PC-3 (cell line): ENCODE measurements at regions of chr6 and their contacts with region 1.

Region 1: DNA sequence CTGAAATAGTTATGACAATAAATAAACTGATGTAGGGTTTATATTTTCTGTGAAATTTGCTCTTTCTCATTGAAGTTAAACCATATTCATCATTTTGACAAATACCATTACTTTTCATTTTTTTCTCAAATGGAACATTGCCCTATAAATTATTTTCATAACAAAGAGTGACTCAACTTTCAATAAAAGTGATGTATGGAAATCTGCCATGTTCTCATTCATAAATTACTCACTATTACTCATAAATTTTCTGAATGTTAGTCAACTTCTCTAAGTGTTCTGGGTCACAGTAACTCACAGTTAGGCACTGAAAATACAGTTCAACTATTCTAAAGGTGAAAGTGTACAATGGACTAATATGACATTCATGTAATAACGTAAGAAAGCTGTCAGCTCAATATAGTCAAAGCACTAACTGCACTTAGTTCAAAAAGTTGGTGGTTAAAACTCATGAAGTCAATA is 19.0 kb upstream of the STX11 start:
- DNase-seq: peak; percentile 93
- ATAC-seq: peak; percentile 95
- H3K4me3 ChIP-seq: peak overlapping the region; percentile 4; the same call in 1 of the 2 replicates
- H3K27ac ChIP-seq: peak overlapping the region; percentile 57
- H3K4me1 ChIP-seq: peaks cover 6% of the 10 kb centered on the region
- H3K27me3 ChIP-seq: no peaks in the 10 kb centered on the region
- CTCF ChIP-seq: no peak

Region 2: GRCh38 chr6:144149891-144150709 is 18.8 kb after region 1 on chr6 and contains the start of gene STX11:
- CTCF ChIA-PET with region 1: no interaction called
- POLR2A ChIA-PET with region 1: no interaction called
- intact Hi-C with region 1: loop called (anchors 2 kb)
- DNase-seq: peak; percentile 58
- ATAC-seq: peak; percentile 88
- H3K4me3 ChIP-seq: peak within 1 kb of the TSS; percentile 73
- H3K27ac ChIP-seq: no peak within 1 kb of the TSS
- H3K4me1 ChIP-seq: peaks cover 9% of the 10 kb centered on the region; the same call in 1 of the 2 replicates
- H3K27me3 ChIP-seq: no peaks in the 10 kb centered on the region
- CTCF ChIP-seq: no peak
- total RNA-seq, gene STX11: 1.2 and 1.5 TPM in 2 replicates

Region 3: GRCh38 chr6:144162977-144163376 is 31.7 kb after region 1 on chr6:
- CTCF ChIA-PET with region 1: no interaction called
- POLR2A ChIA-PET with region 1: no interaction called
- intact Hi-C with region 1: no loop called
- DNase-seq: no peak
- ATAC-seq: no peak
- H3K4me3 ChIP-seq: no peak overlapping the region
- H3K27ac ChIP-seq: no peak overlapping the region
- H3K4me1 ChIP-seq: peaks cover 8% of the 10 kb centered on the region
- H3K27me3 ChIP-seq: no peaks in the 10 kb centered on the region
- CTCF ChIP-seq: no peak

Region 4: GRCh38 chr6:144265390-144265789 is 134.1 kb after region 1 on chr6:
- CTCF ChIA-PET with region 1: no interaction called
- POLR2A ChIA-PET with region 1: no interaction called
- intact Hi-C with region 1: loop called (anchors 1 kb)
- DNase-seq: peak; percentile 82
- ATAC-seq: peak; percentile 35
- H3K4me3 ChIP-seq: peak overlapping the region; percentile 47
- H3K27ac ChIP-seq: peak overlapping the region; percentile 85
- H3K4me1 ChIP-seq: peaks cover 35% of the 10 kb centered on the region
- H3K27me3 ChIP-seq: no peaks in the 10 kb centered on the region
- CTCF ChIP-seq: no peak